Right cardiac atrium (tissue), 5 donors: ENCODE measurements at regions of chr7 and their contacts with region 1.

Region 1: GRCh38 chr7:35424869-35425495 is 171.1 kb upstream of the TBX20 start:
- DNase-seq: peak; percentile 61 to 88 (median 81)
- ATAC-seq: peak; percentile 65 to 74
- H3K4me3 ChIP-seq: no peak overlapping the region
- H3K27ac ChIP-seq: no peak overlapping the region
- H3K4me1 ChIP-seq: peaks cover under 1% of the 10 kb centered on the region
- H3K27me3 ChIP-seq: no peaks in the 10 kb centered on the region

Region 2: GRCh38 chr7:35253710-35254495 is 171.1 kb before region 1 on chr7 and contains the start of gene TBX20:
- intact Hi-C with region 1: loop called in 1 of 4 experiments (anchors 10 kb)
- DNase-seq: peak; percentile 88 to 96 (median 94)
- ATAC-seq: peak; percentile 85
- H3K4me3 ChIP-seq: peak within 1 kb of the TSS; percentile 89
- H3K27ac ChIP-seq: peak within 1 kb of the TSS; percentile 82
- H3K4me1 ChIP-seq: no peaks in the 10 kb centered on the region
- H3K27me3 ChIP-seq: no peaks in the 10 kb centered on the region
- total RNA-seq, gene TBX20: 180 to 254 (median 236) TPM

Region 3: DNA sequence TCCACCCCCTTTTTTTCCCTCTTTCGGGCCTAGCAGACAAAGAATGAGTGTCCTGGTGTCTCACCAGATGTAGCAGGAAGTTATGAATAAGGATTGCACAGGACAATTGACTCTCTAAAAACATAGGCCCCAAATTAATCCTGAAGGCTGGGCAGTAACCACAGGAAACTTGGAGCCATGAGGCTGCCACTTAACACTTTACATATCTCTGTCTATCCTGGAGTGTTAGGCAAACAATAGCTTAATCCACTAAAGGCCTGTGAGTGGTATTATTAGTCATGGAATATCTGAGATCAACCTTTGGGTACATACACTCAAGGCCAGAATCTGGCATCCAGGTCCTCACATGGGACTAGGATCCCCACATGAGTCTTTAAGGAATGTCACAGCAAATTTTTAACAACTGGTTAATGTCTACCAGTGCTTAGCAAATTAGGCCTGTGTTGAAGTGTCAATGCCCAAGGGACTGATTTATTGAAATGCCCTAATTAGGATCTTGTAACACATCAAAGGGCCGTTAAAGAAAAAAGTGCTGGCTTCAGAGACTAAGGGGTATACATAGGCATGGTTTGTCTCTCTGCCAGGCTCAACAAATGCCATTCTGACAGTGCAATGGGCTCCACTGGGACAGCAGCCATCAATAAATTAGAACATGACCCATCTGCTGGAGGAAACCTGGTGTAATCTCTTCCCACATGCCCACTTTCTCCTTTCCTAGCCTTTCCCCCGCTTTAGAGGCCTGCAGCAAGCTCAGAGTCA is 25.7 kb after region 1 on chr7:
- intact Hi-C with region 1: no loop called
- DNase-seq: no peak
- ATAC-seq: peak in 1 of 2 donors; percentile 22
- H3K4me3 ChIP-seq: no peak overlapping the region
- H3K27ac ChIP-seq: no peak overlapping the region
- H3K4me1 ChIP-seq: no peaks in the 10 kb centered on the region
- H3K27me3 ChIP-seq: no peaks in the 10 kb centered on the region

Region 4: GRCh38 chr7:35519971-35520809 is 95.2 kb after region 1 on chr7:
- intact Hi-C with region 1: loop called (anchors 5 to 10 kb)
- DNase-seq: peak; percentile 88 to 96 (median 90)
- ATAC-seq: peak; percentile 92
- H3K4me3 ChIP-seq: no peak overlapping the region
- H3K27ac ChIP-seq: peak overlapping the region; percentile 24
- H3K4me1 ChIP-seq: peaks cover 2% of the 10 kb centered on the region
- H3K27me3 ChIP-seq: no peaks in the 10 kb centered on the region